CD8-positive, alpha-beta memory T cell (primary cell): ENCODE measurements at regions of chr6 and their contacts with region 1.

Region 1: DNA sequence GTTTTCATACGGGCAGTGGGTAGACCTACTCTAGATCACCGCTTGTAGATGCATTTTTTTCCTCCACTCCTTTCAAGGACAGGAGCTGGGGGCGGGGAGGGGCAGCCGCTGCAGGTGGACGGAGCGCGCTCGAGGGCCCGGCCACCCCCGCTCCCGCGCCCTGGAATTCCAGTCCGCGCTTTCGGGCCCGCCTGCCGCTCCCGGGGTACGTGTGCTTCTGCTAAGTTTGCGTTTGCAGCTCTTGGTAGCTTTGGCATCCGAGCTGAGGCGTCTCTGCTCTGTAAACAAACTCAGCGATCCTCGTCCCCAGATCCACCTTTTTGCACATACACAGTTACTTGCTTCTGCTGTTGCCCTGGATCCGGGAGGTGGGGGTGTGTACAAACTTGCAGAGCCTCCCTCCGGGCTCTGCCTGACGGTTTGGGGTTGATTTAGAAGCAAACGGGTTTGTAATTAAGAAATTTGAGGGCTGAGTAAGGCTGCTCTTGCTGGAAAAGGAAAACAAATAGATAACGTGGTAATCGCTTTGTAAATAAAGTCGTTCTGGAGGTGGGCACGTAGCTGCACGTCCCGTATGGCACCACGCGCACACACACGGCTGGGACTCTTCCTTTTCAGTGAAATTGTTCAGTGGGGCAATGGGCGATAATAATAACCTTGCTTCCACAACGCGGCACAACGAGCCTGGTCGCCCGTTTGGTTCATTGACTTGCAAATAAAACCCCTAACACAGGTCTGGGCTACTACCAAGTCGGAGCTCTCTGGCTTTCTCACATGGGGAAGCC is 976 bp upstream of the CITED2 start:
- DNase-seq: peak; percentile 74 to 91 (median 86)
- H3K4me3 ChIP-seq: peak overlapping the region; percentile 98
- H3K4me3 Mint-ChIP-seq: peak overlapping the region; percentile 94 to 100 (median 99)
- H3K27ac ChIP-seq: peak overlapping the region; percentile 96
- H3K27ac Mint-ChIP-seq: peak overlapping the region; percentile 93 to 98 (median 96)
- H3K4me1 ChIP-seq: peaks cover 26% of the 10 kb centered on the region
- H3K4me1 Mint-ChIP-seq: peaks cover 28 to 31% (median 29%) of the 10 kb centered on the region in 3 donors
- H3K27me3 ChIP-seq: no peaks in the 10 kb centered on the region
- H3K27me3 Mint-ChIP-seq: peaks cover 0 to 4% of the 10 kb centered on the region in 2 donors

Region 2: GRCh38 chr6:138987640-138988468 is 387.6 kb before region 1 on chr6 and contains the start of gene REPS1:
- CTCF ChIA-PET with region 1: no interaction called
- POLR2A ChIA-PET with region 1: interaction called, 11 read pairs
- DNase-seq: peak; percentile 88 to 93 (median 89)
- H3K4me3 ChIP-seq: peak within 1 kb of the TSS; percentile 51
- H3K4me3 Mint-ChIP-seq: peak within 1 kb of the TSS in 6 of 7 donors; percentile 87 to 96 (median 93)
- H3K27ac ChIP-seq: peak within 1 kb of the TSS; percentile 66
- H3K27ac Mint-ChIP-seq: peak within 1 kb of the TSS; percentile 84 to 96 (median 92)
- H3K4me1 ChIP-seq: peaks cover 38% of the 10 kb centered on the region
- H3K4me1 Mint-ChIP-seq: peaks cover 8 to 14% (median 11%) of the 10 kb centered on the region in 3 donors
- H3K27me3 ChIP-seq: no peaks in the 10 kb centered on the region
- H3K27me3 Mint-ChIP-seq: peaks cover 0 to 1% of the 10 kb centered on the region in 2 donors
- total RNA-seq, gene REPS1: 64.4 to 69.5 TPM

Region 3: GRCh38 chr6:139037490-139037889 is 337.9 kb before region 1 on chr6:
- CTCF ChIA-PET with region 1: no interaction called
- POLR2A ChIA-PET with region 1: no interaction called
- DNase-seq: no peak
- H3K4me3 ChIP-seq: no peak overlapping the region
- H3K4me3 Mint-ChIP-seq: no peak overlapping the region
- H3K27ac ChIP-seq: no peak overlapping the region
- H3K27ac Mint-ChIP-seq: peak overlapping the region in 1 of 8 donors; percentile 14
- H3K4me1 ChIP-seq: no peaks in the 10 kb centered on the region
- H3K4me1 Mint-ChIP-seq: peaks cover 30 to 43% (median 40%) of the 10 kb centered on the region in 3 donors
- H3K27me3 ChIP-seq: no peaks in the 10 kb centered on the region
- H3K27me3 Mint-ChIP-seq: no peaks in the 10 kb centered on the region

Region 4: DNA sequence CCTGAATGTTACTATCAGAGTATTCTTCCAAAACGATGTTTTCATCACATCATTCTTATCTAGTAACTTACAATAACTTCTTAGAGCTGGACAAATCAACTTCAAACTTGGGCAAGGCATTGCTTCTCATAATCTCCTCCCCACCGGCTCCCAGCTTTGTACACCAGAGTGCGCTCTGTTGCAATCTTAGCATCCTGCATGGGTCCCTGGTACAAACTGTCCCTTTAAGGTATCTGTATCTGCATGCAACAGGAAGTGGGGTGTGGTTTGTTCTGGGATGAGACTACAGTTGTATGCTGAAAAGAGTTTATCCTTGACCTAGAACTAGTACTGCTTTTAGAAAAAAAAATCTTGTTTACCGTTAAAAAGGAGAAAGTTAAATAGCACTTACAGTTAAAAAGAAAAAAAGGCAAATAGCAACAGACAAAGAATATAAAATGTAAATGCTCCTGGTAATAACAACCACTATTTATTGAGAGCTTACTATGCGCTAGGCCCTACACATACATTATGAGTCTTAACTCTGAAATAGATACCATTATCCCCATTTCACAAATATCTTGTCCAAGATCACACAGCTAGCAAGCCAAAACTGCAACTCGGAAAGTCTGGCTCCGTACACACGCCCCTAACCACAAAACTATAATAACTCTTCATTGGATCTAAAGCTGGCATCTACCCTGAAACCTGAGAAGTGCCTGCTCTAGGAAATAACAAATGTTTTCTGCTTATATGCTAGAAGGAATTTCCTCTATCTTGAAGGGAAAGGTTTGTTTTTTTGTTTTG is 250.3 kb before region 1 on chr6:
- CTCF ChIA-PET with region 1: interaction called, 22 read pairs
- POLR2A ChIA-PET with region 1: interaction called, 9 read pairs
- DNase-seq: peak; percentile 48 to 88 (median 83)
- H3K4me3 ChIP-seq: peak overlapping the region; percentile 35
- H3K4me3 Mint-ChIP-seq: peak overlapping the region; percentile 42 to 80 (median 67)
- H3K27ac ChIP-seq: peak overlapping the region; percentile 10
- H3K27ac Mint-ChIP-seq: peak overlapping the region; percentile 83 to 97 (median 92)
- H3K4me1 ChIP-seq: peaks cover 49% of the 10 kb centered on the region
- H3K4me1 Mint-ChIP-seq: peaks cover 40 to 54% (median 49%) of the 10 kb centered on the region in 3 donors
- H3K27me3 ChIP-seq: no peaks in the 10 kb centered on the region
- H3K27me3 Mint-ChIP-seq: no peaks in the 10 kb centered on the region

Region 5: GRCh38 chr6:139219271-139219729 is 156.1 kb before region 1 on chr6:
- CTCF ChIA-PET with region 1: interaction called, 47 read pairs
- POLR2A ChIA-PET with region 1: interaction called, 6 read pairs
- DNase-seq: peak; percentile 37 to 80 (median 55)
- H3K4me3 ChIP-seq: no peak overlapping the region
- H3K4me3 Mint-ChIP-seq: peak overlapping the region in 3 of 7 donors; percentile 40 to 81 (median 62)
- H3K27ac ChIP-seq: no peak overlapping the region
- H3K27ac Mint-ChIP-seq: peak overlapping the region in 7 of 8 donors; percentile 31 to 91 (median 85)
- H3K4me1 ChIP-seq: peaks cover 7% of the 10 kb centered on the region
- H3K4me1 Mint-ChIP-seq: peaks cover 8 to 12% (median 12%) of the 10 kb centered on the region in 3 donors
- H3K27me3 ChIP-seq: no peaks in the 10 kb centered on the region
- H3K27me3 Mint-ChIP-seq: no peaks in the 10 kb centered on the region

Region 6: GRCh38 chr6:139364302-139364981 is 11.0 kb before region 1 on chr6:
- CTCF ChIA-PET with region 1: interaction called, 20 read pairs
- POLR2A ChIA-PET with region 1: interaction called, 7 read pairs
- DNase-seq: peak in 2 of 5 donors; percentile 60 to 63
- H3K4me3 ChIP-seq: no peak overlapping the region
- H3K4me3 Mint-ChIP-seq: peak overlapping the region in 6 of 7 donors; percentile 4 to 43 (median 26)
- H3K27ac ChIP-seq: no peak overlapping the region
- H3K27ac Mint-ChIP-seq: peak overlapping the region in 4 of 8 donors; percentile 12 to 77 (median 62)
- H3K4me1 ChIP-seq: peaks cover 14% of the 10 kb centered on the region
- H3K4me1 Mint-ChIP-seq: peaks cover 23 to 61% (median 45%) of the 10 kb centered on the region in 3 donors
- H3K27me3 ChIP-seq: no peaks in the 10 kb centered on the region
- H3K27me3 Mint-ChIP-seq: no peaks in the 10 kb centered on the region

Region 7: DNA sequence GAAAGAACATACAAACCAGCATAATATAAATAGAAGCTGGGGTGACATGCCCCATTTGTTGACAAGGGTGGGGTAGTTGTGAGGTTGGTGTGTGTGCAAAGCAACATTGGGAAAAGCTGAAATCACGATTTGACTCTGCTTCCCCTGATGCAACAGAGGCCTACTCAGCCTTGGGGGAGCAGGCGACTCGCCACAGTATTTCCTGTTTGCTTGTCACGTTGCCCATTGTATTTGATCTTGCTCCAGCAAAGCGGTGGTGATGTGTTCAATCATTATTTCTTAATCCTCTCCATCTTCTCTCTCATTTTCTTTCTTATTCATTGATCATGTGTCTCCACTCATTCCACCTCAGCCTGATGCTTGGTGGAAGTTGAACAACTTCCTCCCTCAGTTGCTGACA is 164.9 kb after region 1 on chr6:
- CTCF ChIA-PET with region 1: interaction called, 10 read pairs
- POLR2A ChIA-PET with region 1: interaction called, 15 read pairs
- DNase-seq: peak; percentile 15 to 81 (median 25)
- H3K4me3 ChIP-seq: no peak overlapping the region
- H3K4me3 Mint-ChIP-seq: peak overlapping the region in 6 of 7 donors; percentile 66 to 78 (median 73)
- H3K27ac ChIP-seq: no peak overlapping the region
- H3K27ac Mint-ChIP-seq: peak overlapping the region; percentile 78 to 98 (median 92)
- H3K4me1 ChIP-seq: peaks cover 19% of the 10 kb centered on the region
- H3K4me1 Mint-ChIP-seq: peaks cover 54 to 87% (median 86%) of the 10 kb centered on the region in 3 donors
- H3K27me3 ChIP-seq: no peaks in the 10 kb centered on the region
- H3K27me3 Mint-ChIP-seq: no peaks in the 10 kb centered on the region